ENCODE measurements at regions of chr2 and their contacts with region 1.

Region 1: DNA sequence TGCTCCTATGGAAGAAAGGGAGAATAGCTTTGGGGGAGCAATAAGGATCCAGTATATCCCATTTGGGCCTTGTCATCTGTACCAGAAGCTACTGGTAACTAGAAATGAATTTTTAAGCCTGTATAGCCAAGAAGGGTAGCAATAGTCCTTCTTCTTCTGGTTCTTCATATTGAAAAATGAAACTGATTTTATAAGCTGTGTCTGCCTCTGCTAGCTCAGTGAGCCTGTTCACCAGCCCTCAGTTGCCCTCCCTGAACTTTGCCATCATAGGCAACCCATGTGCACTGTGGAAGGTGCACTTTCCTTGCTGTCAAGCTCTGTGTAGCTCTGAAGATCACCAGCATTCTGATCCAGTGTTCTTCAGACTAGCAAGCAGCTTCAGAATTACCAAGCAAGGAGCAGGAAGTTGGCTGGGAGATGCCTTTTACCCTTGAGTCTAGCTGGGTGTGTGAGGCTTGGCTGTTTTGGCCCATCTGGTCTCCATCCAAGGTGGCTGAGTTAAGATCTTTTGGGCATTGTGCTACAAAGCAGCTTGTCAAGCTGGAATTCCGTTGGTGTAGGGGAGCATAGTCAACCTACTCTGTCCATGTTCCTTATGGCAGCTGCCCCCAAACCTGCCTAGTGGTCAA is 55.8 kb upstream of the MGAT5 start:
- DNase-seq: no peak
- ATAC-seq: no peak
- H3K4me3 ChIP-seq: no peak overlapping the region
- H3K27ac ChIP-seq: no peak overlapping the region
- H3K4me1 ChIP-seq: peaks cover 0 to 41% of the 10 kb centered on the region in 2 experiments; a peak in 4 of 5 replicates
- H3K27me3 ChIP-seq: no peaks in the 10 kb centered on the region
- CTCF ChIP-seq: no peak
- EP300 ChIP-seq: no peak
- POLR2A ChIP-seq: no peak
- RAD21 ChIP-seq: no peak

Region 2: DNA sequence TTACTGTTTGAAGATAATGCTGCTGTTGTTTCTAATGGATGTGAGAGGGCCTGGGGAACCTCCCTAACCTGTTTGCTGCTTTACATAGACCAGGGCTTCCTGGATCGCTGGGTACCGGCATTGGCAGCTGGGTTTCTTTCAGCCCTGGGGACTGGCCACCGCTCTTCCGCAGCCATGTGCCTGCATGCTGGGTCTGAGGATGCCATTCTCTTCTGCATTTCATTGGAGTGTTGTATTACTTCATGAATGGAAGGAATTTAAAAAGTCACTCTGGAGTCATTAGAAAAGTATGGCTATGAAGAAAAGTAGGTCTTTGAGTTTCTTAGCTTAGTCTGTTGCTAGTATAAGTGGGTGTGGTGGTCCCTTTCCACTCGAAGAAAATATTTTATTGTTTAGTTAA is 51.5 kb before region 1 on chr2:
- CTCF ChIA-PET with region 1: no interaction called
- POLR2A ChIA-PET with region 1: no interaction called
- in situ Hi-C with region 1: no loop called
- intact Hi-C with region 1: loop called (anchors 5 kb)
- DNase-seq: no peak
- ATAC-seq: no peak
- H3K4me3 ChIP-seq: no peak overlapping the region
- H3K27ac ChIP-seq: no peak overlapping the region
- H3K4me1 ChIP-seq: peaks cover 18 to 21% of the 10 kb centered on the region in 2 experiments
- H3K27me3 ChIP-seq: no peaks in the 10 kb centered on the region
- CTCF ChIP-seq: no peak
- EP300 ChIP-seq: no peak
- POLR2A ChIP-seq: no peak
- RAD21 ChIP-seq: no peak

Region 3: DNA sequence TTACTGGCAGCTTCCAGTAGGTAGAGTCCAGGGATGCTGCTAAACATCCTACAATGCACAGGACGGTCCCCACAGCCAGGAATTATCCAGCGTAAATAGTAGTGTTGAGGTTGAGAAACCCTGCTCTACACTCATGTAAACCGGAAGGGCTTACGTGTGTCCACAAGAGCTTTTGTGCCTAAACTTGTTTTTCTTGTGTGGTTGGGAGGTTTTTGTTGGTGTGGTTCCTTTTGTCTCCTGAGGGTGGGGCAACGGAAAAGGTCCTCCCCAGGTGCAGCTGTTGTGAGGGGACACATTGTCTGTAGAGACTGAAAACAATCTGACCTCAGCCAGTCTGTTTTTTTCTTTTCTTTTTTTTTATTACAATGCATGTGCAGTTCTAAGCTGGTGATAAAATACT is 16.9 kb before region 1 on chr2:
- CTCF ChIA-PET with region 1: no interaction called
- POLR2A ChIA-PET with region 1: no interaction called
- in situ Hi-C with region 1: no loop called
- intact Hi-C with region 1: no loop called
- DNase-seq: no peak
- ATAC-seq: no peak
- H3K4me3 ChIP-seq: no peak overlapping the region
- H3K27ac ChIP-seq: no peak overlapping the region
- H3K4me1 ChIP-seq: no peaks in the 10 kb centered on the region; a peak in 1 of 5 replicates
- H3K27me3 ChIP-seq: no peaks in the 10 kb centered on the region
- CTCF ChIP-seq: no peak
- EP300 ChIP-seq: no peak
- POLR2A ChIP-seq: no peak
- RAD21 ChIP-seq: no peak

Region 4: DNA sequence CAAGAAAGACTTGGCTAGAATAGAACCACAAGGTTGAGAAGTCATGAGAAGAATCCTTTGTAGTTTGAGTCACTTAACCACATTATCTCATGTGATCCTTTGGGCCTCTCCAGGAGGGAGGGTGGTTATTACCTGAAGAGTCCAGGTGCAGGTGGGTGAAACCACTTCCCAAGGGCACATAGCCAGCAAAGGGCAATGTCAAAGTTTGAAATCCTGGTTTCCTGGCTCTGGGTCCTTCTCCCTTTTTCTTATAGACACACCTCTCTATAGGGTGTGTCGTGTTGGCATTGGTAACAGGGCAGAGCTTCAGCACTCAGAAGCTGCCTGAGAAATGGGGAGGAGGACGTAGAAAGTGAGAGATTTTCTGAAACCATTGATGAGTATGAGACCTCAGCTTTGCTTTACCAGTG is 193.6 kb after region 1 on chr2:
- CTCF ChIA-PET with region 1: no interaction called
- POLR2A ChIA-PET with region 1: no interaction called
- in situ Hi-C with region 1: no loop called
- intact Hi-C with region 1: no loop called
- DNase-seq: no peak
- ATAC-seq: no peak
- H3K4me3 ChIP-seq: no peak overlapping the region
- H3K27ac ChIP-seq: no peak overlapping the region
- H3K4me1 ChIP-seq: no peaks in the 10 kb centered on the region
- H3K27me3 ChIP-seq: no peaks in the 10 kb centered on the region
- CTCF ChIP-seq: no peak
- EP300 ChIP-seq: no peak
- POLR2A ChIP-seq: no peak
- RAD21 ChIP-seq: no peak